Tibial artery (tissue), 4 donors: ENCODE measurements at regions of chr10 and their contacts with region 1.

Region 1: GRCh38 chr10:95437669-95438068 is 123.5 kb downstream of the SORBS1 start:
- DNase-seq: no peak
- H3K4me3 ChIP-seq: no peak overlapping the region
- H3K27ac ChIP-seq: peak overlapping the region; percentile 80 to 91
- H3K4me1 ChIP-seq: peaks cover 0 to 100% (median 79%) of the 10 kb centered on the region in 4 donors
- H3K27me3 ChIP-seq: no peaks in the 10 kb centered on the region
- CTCF ChIP-seq: no peak

Region 2: DNA sequence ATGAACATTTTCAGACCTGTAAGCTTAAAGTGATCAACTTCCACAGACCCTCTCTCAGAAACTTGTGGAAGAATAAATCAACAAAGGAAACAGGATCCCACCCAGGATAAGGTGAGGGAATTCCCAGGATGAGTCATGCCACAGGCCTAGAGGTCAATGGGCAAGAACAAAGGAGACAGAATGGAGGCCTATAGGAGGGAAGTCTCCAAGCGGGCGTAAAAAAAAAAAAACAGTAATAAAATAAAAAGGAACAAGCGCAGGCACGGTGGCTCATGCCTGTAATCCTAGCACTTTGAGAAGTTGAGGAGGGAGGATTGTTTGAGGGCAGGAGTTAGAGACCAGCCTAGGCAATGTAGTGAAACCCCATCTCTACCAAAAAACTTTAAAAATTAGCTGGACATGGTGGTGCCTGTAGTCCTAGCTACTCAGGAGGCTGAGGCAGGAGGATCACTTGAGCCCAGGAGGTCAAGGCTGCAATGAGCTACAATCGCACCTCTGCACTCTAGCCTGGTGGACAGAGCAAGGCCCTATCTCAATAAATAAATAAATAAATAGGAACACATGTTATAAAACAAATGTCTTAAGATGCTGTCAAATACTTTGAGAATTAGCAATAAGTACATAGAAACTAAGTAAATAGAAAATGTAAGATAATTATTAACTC is 115.1 kb after region 1 on chr10:
- intact Hi-C with region 1: loop called (anchors 5 kb)
- DNase-seq: no peak
- H3K4me3 ChIP-seq: no peak overlapping the region
- H3K27ac ChIP-seq: peak overlapping the region in 1 of 2 donors; percentile 89
- H3K4me1 ChIP-seq: peaks cover 0 to 95% (median 42%) of the 10 kb centered on the region in 4 donors
- H3K27me3 ChIP-seq: no peaks in the 10 kb centered on the region
- CTCF ChIP-seq: no peak